ENCODE measurements at regions of chr2 and their contacts with region 1.

Region 1: GRCh38 chr2:200735061-200735460 is 76.6 kb upstream of the BZW1 start:
- DNase-seq: peak; percentile 55
- H3K4me3 Mint-ChIP-seq: no peak overlapping the region
- H3K27ac Mint-ChIP-seq: no peak overlapping the region
- H3K4me1 Mint-ChIP-seq: peaks cover 13% of the 10 kb centered on the region
- H3K27me3 Mint-ChIP-seq: peaks cover 9% of the 10 kb centered on the region

Region 2: DNA sequence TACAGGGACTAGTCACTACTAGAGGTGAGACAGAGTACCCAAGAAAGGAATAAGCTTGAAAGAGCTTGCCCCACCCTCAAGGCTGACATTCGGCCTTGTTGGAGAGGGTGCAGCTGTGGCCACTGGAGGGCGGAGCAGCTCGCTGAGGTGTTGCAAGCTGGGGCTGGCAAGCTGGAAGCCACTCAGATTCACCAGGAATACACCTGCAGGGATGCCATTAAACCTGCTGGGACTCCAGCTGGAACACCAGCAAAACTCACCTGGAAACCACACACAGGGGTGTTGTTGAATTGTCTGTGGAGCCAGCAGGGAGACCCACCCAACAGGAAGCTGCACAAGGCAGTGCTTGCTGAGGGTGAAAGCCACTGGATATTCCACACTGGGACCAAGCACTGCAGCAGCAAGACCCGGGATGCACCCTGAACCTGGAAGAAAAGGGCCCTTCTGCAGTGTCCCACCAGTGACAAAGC is 251.3 kb before region 1 on chr2:
- CTCF ChIA-PET with region 1: interaction called, 8 read pairs
- intact Hi-C with region 1: loop called (anchors 1 kb)
- DNase-seq: peak; percentile 67
- H3K4me3 Mint-ChIP-seq: no peak overlapping the region
- H3K27ac Mint-ChIP-seq: no peak overlapping the region
- H3K4me1 Mint-ChIP-seq: peaks cover 2% of the 10 kb centered on the region
- H3K27me3 Mint-ChIP-seq: no peaks in the 10 kb centered on the region

Region 3: GRCh38 chr2:200578778-200579177 is 156.3 kb before region 1 on chr2:
- CTCF ChIA-PET with region 1: interaction called, 5 read pairs
- intact Hi-C with region 1: loop called (anchors 1 kb)
- DNase-seq: peak; percentile 18
- H3K4me3 Mint-ChIP-seq: no peak overlapping the region
- H3K27ac Mint-ChIP-seq: peak overlapping the region; percentile 16
- H3K4me1 Mint-ChIP-seq: peaks cover 14% of the 10 kb centered on the region
- H3K27me3 Mint-ChIP-seq: no peaks in the 10 kb centered on the region

Region 4: DNA sequence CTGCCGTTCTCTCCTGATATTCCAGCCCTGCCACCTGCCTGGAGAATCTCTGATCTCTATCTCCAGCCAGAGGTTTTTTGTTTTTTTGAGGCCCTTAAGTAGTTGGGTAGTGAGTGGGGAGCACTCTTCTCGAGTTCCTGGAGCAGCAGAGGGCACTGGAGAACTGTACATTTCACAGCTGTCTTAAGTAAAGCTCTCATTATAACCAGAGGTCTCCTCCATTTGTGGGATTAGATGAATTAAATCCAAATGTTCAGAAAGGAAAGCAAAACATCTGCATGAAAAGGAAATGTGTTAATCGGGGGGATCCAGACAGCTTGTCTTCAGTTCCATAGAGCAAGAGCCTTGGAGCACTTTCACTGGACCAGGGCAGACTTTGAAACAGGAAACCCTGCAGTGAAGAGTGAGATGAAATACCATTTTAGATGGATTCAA is 116.5 kb before region 1 on chr2:
- CTCF ChIA-PET with region 1: no interaction called
- intact Hi-C with region 1: loop called (anchors 1 kb)
- DNase-seq: peak; percentile 29
- H3K4me3 Mint-ChIP-seq: no peak overlapping the region
- H3K27ac Mint-ChIP-seq: no peak overlapping the region
- H3K4me1 Mint-ChIP-seq: peaks cover 10% of the 10 kb centered on the region
- H3K27me3 Mint-ChIP-seq: no peaks in the 10 kb centered on the region